Heart left ventricle (tissue), 16 donors: ENCODE measurements at regions of chr19 and their contacts with region 1.

Region 1: DNA sequence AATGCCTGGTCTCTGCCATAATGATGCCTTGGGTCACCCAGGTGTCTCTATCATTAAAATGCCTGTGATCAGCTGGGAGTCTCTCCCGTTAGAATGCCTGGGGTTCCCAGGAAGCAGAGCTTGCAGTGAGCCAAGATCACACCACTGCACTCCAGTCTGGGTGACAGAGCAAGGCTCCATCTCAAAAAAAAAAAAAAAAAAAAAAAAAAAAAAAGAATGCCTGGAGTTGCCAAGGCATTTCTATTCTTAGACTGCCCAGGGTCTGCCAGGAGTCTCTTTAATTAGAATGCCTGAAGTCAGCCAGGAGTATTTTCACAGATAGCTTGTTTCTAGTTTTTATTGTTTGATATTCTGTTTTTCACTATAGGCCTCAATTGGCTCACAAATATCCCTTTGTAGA is 1552.5 kb downstream of the UQCRFS1 start:
- DNase-seq: peak in 1 of 5 donors; percentile 32
- ATAC-seq: peak; percentile 54 to 96 (median 80)
- H3K4me3 ChIP-seq: no peak overlapping the region
- H3K27ac ChIP-seq: no peak overlapping the region
- H3K4me1 ChIP-seq: peaks cover 0 to 10% (median 0%) of the 10 kb centered on the region in 12 donors
- H3K27me3 ChIP-seq: no peaks in the 10 kb centered on the region
- CTCF ChIP-seq: no peak
- POLR2A ChIP-seq: no peak

Region 2: DNA sequence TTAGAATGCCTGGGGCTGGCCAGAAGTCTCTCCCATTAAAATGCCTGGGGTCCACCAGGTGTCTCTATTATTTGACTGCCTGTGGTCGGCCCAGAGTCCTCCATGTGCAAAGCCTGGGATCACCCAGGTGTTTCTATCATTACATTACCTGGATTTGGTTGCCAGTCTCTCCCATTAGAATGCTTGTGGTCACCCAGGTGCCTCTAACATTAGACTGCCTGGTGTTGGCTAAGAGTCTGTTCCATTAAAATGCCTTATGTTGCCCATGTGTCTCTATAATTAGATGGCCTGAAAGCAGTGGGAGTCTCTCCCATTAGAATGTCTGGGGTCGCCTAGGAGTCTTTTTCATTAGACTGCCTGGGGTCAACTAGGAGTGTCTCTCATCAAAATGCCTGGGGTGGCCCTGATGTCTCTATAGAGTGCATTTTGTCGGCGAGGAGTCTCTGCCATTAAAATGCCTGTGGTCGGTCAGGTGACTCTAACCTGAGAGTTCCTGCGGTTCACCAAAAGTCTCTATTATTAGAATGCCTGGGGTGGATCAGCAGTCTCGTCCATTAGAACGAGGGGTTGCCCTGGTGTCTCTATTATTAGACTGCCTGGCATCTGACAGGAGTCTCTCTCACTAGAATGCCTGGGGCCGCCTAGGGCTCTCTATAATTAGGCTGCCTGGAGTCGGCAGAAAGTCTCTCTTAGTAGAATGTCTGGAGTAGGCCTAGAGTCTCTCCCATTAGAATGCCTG is 12.1 kb after region 1 on chr19:
- intact Hi-C with region 1: no loop called
- DNase-seq: peak in 4 of 5 donors; percentile 52 to 72 (median 58)
- ATAC-seq: peak; percentile 81 to 92 (median 90)
- H3K4me3 ChIP-seq: no peak overlapping the region
- H3K27ac ChIP-seq: peak overlapping the region in 5 of 12 donors; percentile 55 to 74 (median 60)
- H3K4me1 ChIP-seq: peaks cover 0 to 43% (median 11%) of the 10 kb centered on the region in 12 donors
- H3K27me3 ChIP-seq: no peaks in the 10 kb centered on the region
- CTCF ChIP-seq: no peak
- POLR2A ChIP-seq: no peak

Region 3: DNA sequence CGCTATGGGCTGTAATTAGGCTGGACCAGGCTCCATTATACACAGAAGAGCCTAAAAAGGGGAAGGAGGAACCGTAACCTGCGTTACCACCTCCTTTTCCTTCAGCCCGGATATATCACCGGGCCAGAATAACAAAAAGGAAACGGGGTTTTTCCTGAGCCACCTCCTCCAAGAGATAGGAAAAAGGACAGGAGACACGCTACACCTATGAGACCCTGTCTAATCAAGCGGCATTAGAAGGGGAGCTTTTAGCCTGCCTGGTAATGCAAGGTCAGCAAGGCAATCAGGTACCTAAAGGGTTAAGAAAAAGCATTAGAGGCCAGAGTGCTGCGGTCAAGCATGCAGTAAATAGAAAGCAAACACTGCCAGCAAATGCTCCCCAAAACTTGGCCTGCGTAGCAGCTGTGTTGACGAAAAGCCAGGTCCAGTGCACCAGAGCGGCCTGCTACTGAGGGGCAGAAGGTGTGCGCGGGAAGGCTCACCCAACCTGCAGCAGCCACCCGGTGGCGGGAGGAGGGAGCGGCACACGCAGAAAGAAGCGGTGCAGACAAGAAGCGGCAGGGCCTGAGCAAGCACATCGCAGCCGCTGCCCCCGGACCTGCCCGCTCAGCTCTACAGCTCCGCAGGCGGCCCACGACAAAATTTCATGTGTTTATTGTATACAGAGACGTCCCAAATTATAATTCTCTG is 86.4 kb after region 1 on chr19:
- intact Hi-C with region 1: loop called in 1 of 10 experiments (anchors 5 kb)
- DNase-seq: peak; percentile 18 to 72 (median 44)
- ATAC-seq: peak; percentile 58 to 88 (median 79)
- H3K4me3 ChIP-seq: peak overlapping the region in 8 of 12 donors; percentile 20 to 49 (median 36)
- H3K27ac ChIP-seq: no peak overlapping the region
- H3K4me1 ChIP-seq: peaks cover 0 to 30% (median 11%) of the 10 kb centered on the region in 12 donors
- H3K27me3 ChIP-seq: no peaks in the 10 kb centered on the region
- CTCF ChIP-seq: peak in 10 of 12 donors; percentile 30 to 50 (median 38)
- POLR2A ChIP-seq: no peak

Region 4: DNA sequence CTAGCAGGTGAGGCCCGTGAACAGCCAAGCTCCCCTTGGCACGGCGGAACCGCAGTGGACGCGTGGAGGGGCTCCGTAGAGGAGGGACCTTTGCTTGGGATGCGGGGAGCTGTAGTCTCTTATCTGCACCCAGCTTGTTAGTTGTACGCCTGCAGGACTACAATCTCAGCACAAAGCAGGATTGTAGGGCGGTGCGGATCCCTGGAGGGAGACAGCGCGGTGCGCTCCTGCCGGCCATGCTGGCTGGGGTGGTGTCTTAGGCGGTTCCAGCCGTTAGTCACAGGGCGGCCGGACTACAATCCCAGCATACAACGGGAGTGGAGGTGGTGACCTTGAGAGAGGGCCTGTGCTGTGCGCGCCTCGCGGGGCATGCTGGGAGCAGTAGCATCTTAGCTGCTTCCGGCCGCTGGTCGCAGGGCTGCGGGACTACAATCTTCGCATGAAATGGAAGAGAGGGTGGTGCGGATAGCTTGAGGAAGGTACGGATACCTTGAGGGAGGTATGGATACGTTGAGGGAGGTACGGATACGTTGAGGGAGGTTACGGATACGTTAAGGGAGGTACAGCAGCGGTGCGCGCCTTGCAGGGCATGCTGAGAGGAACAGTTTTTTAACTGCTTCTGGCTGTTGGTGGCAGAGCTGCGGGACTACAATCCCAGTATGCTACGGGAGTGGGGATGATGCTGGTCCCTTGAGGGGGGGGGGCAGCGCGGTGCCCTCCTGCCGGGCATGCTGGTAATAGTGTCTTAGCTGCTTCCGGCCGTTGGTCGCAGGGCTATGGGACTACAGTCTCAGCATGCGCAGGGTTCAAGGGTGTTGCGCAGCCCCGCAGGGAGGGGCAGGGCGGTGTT is 133.4 kb after region 1 on chr19:
- intact Hi-C with region 1: loop called in 1 of 10 experiments (anchors 5 kb)
- DNase-seq: peak; percentile 92 to 97 (median 95)
- ATAC-seq: peak; percentile 98 to 99 (median 98)
- H3K4me3 ChIP-seq: peak overlapping the region; percentile 58 to 95 (median 82)
- H3K27ac ChIP-seq: peak overlapping the region; percentile 82 to 94 (median 90)
- H3K4me1 ChIP-seq: peaks cover 0 to 33% (median 17%) of the 10 kb centered on the region in 12 donors
- H3K27me3 ChIP-seq: no peaks in the 10 kb centered on the region
- CTCF ChIP-seq: peak in 1 of 12 donors; percentile 11
- POLR2A ChIP-seq: peak in 1 of 2 donors; percentile 45